Activated CD4-positive, alpha-beta T cell treated with anti-CD3 and anti-CD28 coated beads, Interleukin-2, amount 10 ng/mL, durations not matched to agents 7 days and 5 days (primary cell): ENCODE measurements at regions of chr4 and their contacts with region 1.

Region 1: DNA sequence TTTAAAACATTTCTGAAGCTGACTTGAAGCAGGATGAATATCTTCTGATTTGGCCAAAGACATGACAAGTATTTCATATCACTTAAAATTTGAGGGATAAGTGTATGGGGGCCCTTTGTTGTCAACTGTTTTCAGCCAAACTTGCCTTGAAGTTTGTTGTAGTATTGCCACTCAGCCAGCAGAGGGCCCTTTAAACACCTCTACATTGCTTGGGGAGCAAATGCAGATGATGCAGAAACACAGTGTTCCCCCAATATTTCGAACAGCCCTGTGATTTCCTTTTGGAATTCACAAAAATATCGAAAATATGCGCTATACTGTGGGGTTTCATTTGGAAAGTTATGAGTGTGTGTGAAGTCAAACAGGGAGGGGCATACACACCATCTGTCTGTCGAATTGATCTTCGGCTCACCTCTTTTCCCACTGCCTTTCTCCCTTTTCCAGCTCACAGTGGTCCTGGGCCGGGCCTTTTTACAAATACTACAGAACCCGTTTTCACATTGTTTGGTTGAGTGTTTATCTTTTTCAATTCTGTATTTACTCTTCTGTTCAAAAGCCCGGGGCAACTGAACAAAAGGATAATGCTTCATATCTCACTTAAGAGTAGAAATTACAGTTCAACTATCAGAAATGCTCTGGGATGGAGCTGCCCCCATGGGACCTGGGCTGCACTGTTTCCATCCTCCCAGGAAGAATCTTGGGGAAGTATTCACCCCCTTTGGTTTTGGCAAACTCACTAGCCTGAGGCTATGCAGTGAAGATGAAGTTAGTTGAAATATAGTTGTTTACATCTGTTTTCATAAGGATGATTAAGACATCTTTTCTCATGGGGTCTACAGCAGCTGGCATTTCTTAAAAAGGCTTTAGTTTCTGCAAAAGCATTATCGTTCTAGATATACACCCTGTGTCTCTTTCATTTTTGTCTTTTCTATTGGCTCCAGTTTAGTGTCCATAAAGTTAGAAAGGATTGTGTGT is 137.6 kb downstream of the EGF start:
- DNase-seq: peak; percentile 69
- H3K4me3 Mint-ChIP-seq: no peak overlapping the region
- H3K27ac Mint-ChIP-seq: no peak overlapping the region
- H3K4me1 Mint-ChIP-seq: peaks cover 6% of the 10 kb centered on the region
- H3K27me3 Mint-ChIP-seq: no peaks in the 10 kb centered on the region

Region 2: DNA sequence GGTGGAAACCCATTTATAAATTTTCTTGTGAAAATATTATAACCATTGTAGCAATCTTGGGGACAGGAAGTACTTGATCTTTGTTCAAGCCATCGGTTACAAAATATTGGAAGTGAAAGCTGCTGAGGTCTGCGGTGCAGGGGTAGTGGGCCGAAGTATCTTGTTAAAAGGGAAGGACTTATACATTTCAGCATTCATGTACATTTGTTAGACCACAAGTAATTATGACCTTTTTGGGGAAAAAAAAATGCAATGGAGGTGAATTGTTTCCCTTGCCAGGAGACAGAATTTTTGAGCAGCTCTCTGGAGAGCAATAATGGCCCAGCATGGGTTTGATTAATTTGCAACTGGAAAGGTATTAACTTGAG is 16.2 kb before region 1 on chr4:
- CTCF ChIA-PET with region 1: interaction called, 10 read pairs
- POLR2A ChIA-PET with region 1: no interaction called
- DNase-seq: no peak
- H3K4me3 Mint-ChIP-seq: no peak overlapping the region
- H3K27ac Mint-ChIP-seq: no peak overlapping the region
- H3K4me1 Mint-ChIP-seq: peaks cover 16% of the 10 kb centered on the region
- H3K27me3 Mint-ChIP-seq: peaks cover 40% of the 10 kb centered on the region

Region 3: DNA sequence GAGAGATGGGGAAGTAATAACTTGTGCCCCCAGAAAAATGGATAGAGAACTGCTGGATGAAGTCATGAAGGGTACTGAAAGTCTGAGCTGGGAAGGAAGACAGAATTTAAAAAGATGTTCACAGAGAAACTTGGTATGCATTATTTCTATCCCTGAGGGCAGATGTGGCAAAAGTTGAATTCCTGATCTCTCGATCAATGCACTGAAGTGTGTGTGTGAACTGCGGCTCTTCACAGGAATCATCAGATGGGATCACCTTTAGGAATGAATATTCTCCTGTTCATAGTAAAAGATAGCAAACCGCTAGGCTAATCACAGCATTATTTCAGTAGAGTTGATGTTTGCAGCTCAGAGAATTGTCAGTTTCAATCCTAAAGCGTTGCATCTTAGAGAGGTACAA is 61.8 kb after region 1 on chr4:
- CTCF ChIA-PET with region 1: no interaction called
- POLR2A ChIA-PET with region 1: no interaction called
- DNase-seq: no peak
- H3K4me3 Mint-ChIP-seq: no peak overlapping the region
- H3K27ac Mint-ChIP-seq: no peak overlapping the region
- H3K4me1 Mint-ChIP-seq: peaks cover 2% of the 10 kb centered on the region
- H3K27me3 Mint-ChIP-seq: no peaks in the 10 kb centered on the region

Region 4: DNA sequence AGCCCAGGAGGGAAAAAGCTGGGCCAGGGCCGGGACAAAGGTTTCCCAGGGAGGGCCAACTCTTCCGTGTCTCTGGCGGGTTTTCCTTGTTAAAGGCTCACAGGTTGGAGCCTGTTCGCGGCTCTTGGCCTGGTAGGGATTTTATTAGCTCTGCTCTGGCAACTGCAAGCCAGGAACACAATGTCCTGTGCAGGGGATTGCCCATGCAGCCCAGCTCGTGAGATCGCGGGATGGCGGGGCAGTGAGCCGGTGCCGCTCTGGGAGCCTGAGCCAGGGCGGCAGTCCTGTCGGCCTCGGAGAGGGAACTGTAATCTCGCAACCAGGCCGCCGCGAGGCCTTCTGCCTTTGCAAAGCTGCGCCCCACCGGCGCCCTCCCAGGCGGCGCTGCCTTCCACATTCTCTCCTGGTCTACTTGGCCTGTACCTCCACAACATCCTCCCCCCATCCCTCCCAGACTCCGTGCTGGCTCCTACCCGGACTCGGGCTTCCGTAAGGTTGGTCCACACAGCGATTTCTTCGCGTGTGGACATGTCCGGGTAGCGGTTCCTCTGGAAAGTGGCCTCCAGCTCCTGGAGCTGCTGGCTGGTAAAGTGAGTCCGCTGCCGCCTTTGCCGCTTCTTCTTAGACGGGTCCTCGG is 570.6 kb after region 1 on chr4:
- CTCF ChIA-PET with region 1: no interaction called
- POLR2A ChIA-PET with region 1: no interaction called
- DNase-seq: no peak
- H3K4me3 Mint-ChIP-seq: no peak overlapping the region
- H3K27ac Mint-ChIP-seq: no peak overlapping the region
- H3K4me1 Mint-ChIP-seq: peaks cover 14% of the 10 kb centered on the region
- H3K27me3 Mint-ChIP-seq: peaks cover 96% of the 10 kb centered on the region